Endothelial cell of umbilical vein (primary cell): ENCODE measurements at regions of chr10 and their contacts with region 1.

Region 1: DNA sequence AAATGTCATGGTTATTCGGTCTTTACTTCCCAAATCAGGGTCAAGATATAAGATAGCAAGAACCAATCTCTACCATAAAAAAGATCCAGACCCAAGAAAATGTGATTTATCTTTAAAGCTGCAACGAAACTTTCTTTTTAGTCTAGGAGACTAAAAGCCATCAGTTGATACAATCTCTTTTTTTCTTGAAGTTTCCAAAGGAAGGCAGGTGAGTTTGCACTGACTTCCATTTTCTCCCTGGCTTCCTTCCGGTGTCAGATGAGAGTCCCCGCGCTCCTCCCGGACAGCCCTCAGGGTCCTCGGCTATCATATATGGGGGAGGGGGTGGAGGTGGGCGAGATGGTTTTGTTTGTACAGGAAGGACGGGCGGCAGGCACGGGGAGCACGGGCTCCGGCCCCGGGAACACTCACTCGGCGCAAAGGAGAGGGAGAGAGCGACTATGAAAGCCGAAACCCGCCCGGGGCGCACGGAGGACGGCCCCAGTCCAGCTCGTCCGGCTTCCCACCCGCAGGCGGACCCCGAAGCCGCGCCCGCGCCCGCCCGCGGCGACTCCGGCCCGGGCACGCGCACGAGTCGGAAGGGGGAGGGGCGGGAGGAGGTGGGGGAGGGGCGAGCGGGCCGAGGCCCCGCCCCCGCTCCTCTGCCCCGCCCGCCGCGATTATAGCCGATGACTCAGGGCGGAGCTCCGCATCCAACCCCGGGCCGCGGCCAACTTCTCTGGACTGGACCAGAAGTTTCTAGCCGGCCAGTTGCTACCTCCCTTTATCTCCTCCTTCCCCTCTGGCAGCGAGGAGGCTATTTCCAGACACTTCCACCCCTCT is at the start of gene BAG3:
- DNase-seq: peak; percentile 84
- H3K4me3 ChIP-seq: peak within 1 kb of the TSS; percentile 86 to 97 (median 93)
- H3K27ac ChIP-seq: peak within 1 kb of the TSS; percentile 56
- H3K4me1 ChIP-seq: peaks cover 34% of the 10 kb centered on the region
- H3K27me3 ChIP-seq: no peaks in the 10 kb centered on the region
- CTCF ChIP-seq: no peak
- POLR2A ChIP-seq: peak; percentile 99
- total RNA-seq, gene BAG3: 65.4 and 66.7 TPM in 2 replicates

Region 2: GRCh38 chr10:119103903-119104652 is 546.8 kb before region 1 on chr10 and contains the start of gene DENND10:
- CTCF ChIA-PET with region 1: no interaction called
- POLR2A ChIA-PET with region 1: no interaction called
- dilution Hi-C with region 1: no loop called
- intact Hi-C with region 1: loop called (anchors 10 kb)
- DNase-seq: peak; percentile 76
- H3K4me3 ChIP-seq: peak within 1 kb of the TSS; percentile 30 to 72 (median 40)
- H3K27ac ChIP-seq: no peak within 1 kb of the TSS
- H3K4me1 ChIP-seq: peaks cover 22% of the 10 kb centered on the region
- H3K27me3 ChIP-seq: no peaks in the 10 kb centered on the region
- CTCF ChIP-seq: no peak
- POLR2A ChIP-seq: peak; percentile 90
- total RNA-seq, gene DENND10: 50.1 and 54.3 TPM in 2 replicates

Region 3: GRCh38 chr10:119602241-119603095 is 48.4 kb before region 1 on chr10:
- CTCF ChIA-PET with region 1: interaction called, 10 read pairs
- POLR2A ChIA-PET with region 1: interaction called, 6 read pairs
- dilution Hi-C with region 1: no loop called
- intact Hi-C with region 1: loop called (anchors 1 kb)
- DNase-seq: peak; percentile 38
- H3K4me3 ChIP-seq: no peak overlapping the region
- H3K27ac ChIP-seq: no peak overlapping the region
- H3K4me1 ChIP-seq: peaks cover 5% of the 10 kb centered on the region
- H3K27me3 ChIP-seq: no peaks in the 10 kb centered on the region
- CTCF ChIP-seq: peak; percentile 63 to 84
- POLR2A ChIP-seq: no peak

Region 4: DNA sequence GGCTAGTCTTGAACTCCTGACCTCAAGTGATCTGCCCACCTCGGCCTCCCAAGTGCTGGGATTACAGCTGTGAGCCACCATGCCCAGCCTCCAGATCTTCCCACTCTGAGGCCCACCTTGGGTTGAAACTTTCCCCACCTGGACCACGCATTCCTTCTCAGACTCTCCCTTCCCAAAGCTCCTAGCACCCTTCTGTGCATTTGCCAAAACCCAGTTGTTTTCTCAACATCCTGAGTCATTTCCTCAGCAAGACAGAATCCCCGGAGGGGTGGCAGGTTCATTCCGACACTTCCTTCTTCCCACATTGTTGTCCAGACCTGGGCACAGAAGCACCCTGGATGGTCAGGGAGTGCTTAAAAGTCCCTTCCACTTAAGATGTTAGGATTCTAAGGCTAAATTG is 29.1 kb after region 1 on chr10:
- CTCF ChIA-PET with region 1: interaction called, 6 read pairs
- POLR2A ChIA-PET with region 1: no interaction called
- dilution Hi-C with region 1: no loop called
- intact Hi-C with region 1: loop called (anchors 1 kb)
- DNase-seq: peak; percentile 86
- H3K4me3 ChIP-seq: no peak overlapping the region
- H3K27ac ChIP-seq: peak overlapping the region; percentile 92
- H3K4me1 ChIP-seq: peaks cover 25% of the 10 kb centered on the region
- H3K27me3 ChIP-seq: no peaks in the 10 kb centered on the region
- CTCF ChIP-seq: no peak
- POLR2A ChIP-seq: peak; percentile 67

Region 5: DNA sequence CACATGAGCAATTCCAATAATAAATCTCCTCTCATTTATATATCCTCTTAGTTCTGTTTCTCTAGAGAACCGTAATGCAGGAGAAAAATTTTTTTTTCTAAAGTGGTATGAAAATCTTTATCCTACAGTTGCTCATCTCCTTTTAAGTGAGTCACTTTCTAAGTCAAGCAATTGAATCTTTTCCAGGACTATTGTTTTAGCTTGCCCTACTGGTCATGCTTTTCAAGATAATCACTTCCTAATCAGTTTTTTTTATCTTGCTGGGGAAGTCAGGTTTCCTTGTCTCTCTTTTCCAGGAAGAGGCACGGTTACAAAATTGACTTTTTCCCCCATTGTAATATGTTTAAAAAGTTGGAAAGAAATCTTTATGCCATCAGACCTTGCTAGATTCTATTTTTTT is 119.0 kb after region 1 on chr10:
- CTCF ChIA-PET with region 1: no interaction called
- POLR2A ChIA-PET with region 1: interaction called, 3 read pairs
- dilution Hi-C with region 1: no loop called
- intact Hi-C with region 1: loop called (anchors 1 kb)
- DNase-seq: peak; percentile 86
- H3K4me3 ChIP-seq: peak overlapping the region in 1 of 3 experiments; percentile 57
- H3K27ac ChIP-seq: peak overlapping the region; percentile 91
- H3K4me1 ChIP-seq: peaks cover 53% of the 10 kb centered on the region
- H3K27me3 ChIP-seq: no peaks in the 10 kb centered on the region
- CTCF ChIP-seq: no peak
- POLR2A ChIP-seq: peak; percentile 53

Region 6: GRCh38 chr10:119784340-119785070 is 133.6 kb after region 1 on chr10:
- CTCF ChIA-PET with region 1: no interaction called
- POLR2A ChIA-PET with region 1: no interaction called
- dilution Hi-C with region 1: no loop called
- intact Hi-C with region 1: no loop called
- DNase-seq: no peak
- H3K4me3 ChIP-seq: no peak overlapping the region
- H3K27ac ChIP-seq: no peak overlapping the region
- H3K4me1 ChIP-seq: peaks cover 24% of the 10 kb centered on the region
- H3K27me3 ChIP-seq: no peaks in the 10 kb centered on the region
- CTCF ChIP-seq: no peak
- POLR2A ChIP-seq: no peak